ENCODE measurements at regions of chr3 and their contacts with region 1.

Region 1: GRCh38 chr3:57244946-57245345 is 17.4 kb downstream of the APPL1 start:
- DNase-seq: no peak
- ATAC-seq: no peak
- H3K4me3 ChIP-seq: no peak overlapping the region
- H3K27ac ChIP-seq: no peak overlapping the region
- H3K4me1 ChIP-seq: peaks cover 0 to 4% (median 0%) of the 10 kb centered on the region in 12 donors
- H3K27me3 ChIP-seq: no peaks in the 10 kb centered on the region
- CTCF ChIP-seq: no peak
- POLR2A ChIP-seq: no peak

Region 2: DNA sequence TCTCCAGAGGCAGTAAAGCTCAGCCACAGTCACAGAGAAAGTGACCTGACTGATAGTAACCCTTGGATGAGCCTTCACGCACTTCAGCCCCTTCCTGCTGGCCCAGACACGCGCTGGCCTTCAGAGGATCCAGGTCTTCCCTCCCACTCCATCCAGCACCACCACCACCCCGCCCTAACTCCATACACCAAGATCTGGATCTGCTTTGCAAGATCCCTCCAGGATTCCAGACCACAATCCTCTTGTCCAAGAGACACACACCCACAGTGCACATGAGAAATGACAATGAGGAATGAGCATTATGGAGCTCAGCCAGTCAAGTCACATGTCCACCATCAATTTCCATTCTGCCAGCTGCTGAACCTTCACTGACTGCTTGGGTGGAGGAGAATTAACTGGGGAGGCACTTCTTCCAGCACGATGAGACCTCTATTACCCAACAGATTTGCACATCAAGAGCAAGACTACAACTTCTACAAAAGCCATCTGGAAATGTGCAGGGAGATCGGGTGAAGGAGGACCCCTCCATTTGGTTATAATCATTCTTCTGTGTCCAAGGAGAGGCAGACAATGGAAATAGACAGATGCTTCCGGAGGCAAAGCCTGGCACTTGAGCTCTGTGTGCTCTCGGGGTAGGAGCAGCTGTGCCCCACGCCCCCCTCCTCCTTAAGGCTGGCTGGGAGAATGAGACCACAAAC is 196.8 kb before region 1 on chr3:
- intact Hi-C with region 1: no loop called
- DNase-seq: peak in 1 of 5 donors; percentile 32
- ATAC-seq: peak in 3 of 4 donors; percentile 44 to 69 (median 58)
- H3K4me3 ChIP-seq: no peak overlapping the region
- H3K27ac ChIP-seq: no peak overlapping the region
- H3K4me1 ChIP-seq: peaks cover 0 to 32% (median 4%) of the 10 kb centered on the region in 12 donors
- H3K27me3 ChIP-seq: no peaks in the 10 kb centered on the region
- CTCF ChIP-seq: no peak
- POLR2A ChIP-seq: no peak

Region 3: GRCh38 chr3:57279685-57280084 is 34.7 kb after region 1 on chr3:
- intact Hi-C with region 1: loop called in 1 of 10 experiments (anchors 5 kb)
- DNase-seq: no peak
- ATAC-seq: no peak
- H3K4me3 ChIP-seq: no peak overlapping the region
- H3K27ac ChIP-seq: no peak overlapping the region
- H3K4me1 ChIP-seq: no peaks in the 10 kb centered on the region
- H3K27me3 ChIP-seq: no peaks in the 10 kb centered on the region
- CTCF ChIP-seq: no peak
- POLR2A ChIP-seq: no peak

Region 4: GRCh38 chr3:57298041-57298440 is 53.1 kb after region 1 on chr3:
- intact Hi-C with region 1: no loop called
- DNase-seq: no peak
- ATAC-seq: no peak
- H3K4me3 ChIP-seq: no peak overlapping the region
- H3K27ac ChIP-seq: no peak overlapping the region
- H3K4me1 ChIP-seq: peaks cover 0 to 8% (median 0%) of the 10 kb centered on the region in 12 donors
- H3K27me3 ChIP-seq: no peaks in the 10 kb centered on the region
- CTCF ChIP-seq: no peak
- POLR2A ChIP-seq: no peak